ENCODE measurements at regions of chr17 and their contacts with region 1.

Region 1: DNA sequence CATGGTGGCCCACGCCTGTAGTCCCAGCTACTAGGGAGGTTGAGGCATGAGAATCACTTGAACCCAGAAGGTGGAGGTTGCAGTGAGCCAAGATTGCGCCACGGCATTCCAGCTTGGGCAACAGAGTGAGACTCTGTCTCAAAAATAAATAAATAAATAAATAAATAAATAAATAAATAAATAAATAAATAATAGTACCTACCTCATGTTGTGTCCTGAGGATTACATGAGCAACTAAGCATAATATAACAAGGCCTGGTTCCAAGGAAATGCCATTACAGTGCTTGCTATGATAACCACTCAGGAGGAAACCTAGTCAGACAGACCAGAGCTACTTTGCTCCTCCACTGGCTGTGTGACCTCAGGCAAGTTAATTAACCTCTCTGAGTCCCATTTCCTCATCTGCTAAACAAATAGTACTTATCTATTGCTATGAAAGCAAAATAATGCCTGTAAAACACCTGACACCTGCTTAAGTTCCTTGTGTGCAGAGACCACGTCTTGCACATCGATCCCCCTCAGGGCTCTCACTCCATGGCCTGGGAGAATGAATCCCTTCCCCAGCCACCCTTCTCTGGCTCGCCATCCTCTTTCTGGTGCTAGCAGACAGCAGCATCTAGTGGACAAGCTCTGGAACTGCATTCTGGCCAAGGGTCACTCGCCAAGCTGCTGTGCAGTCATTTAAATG is 7.5 kb downstream of the EPOP start:
- DNase-seq: peak; percentile 81
- ATAC-seq: peak; percentile 76
- H3K4me3 ChIP-seq: no peak overlapping the region
- H3K27ac ChIP-seq: no peak overlapping the region
- H3K4me1 ChIP-seq: peaks cover 6% of the 10 kb centered on the region
- H3K27me3 ChIP-seq: no peaks in the 10 kb centered on the region
- CTCF ChIP-seq: peak; percentile 95

Region 2: DNA sequence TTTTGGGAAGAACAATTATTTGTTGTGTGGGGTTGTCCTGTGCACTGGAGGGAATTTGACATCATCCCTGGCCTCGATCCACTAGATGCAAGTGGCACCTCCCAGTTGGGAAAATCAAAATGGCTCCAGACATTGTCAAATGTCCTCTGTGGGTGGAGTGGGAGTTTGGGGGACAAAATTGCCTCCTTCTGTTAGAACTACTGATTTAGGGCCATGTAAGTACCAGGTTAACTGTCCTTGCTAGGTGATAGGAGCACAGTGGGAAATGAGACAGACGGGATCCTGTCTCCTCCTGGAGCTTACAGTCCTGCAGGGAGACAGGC is 182.1 kb before region 1 on chr17:
- CTCF ChIA-PET with region 1: no interaction called
- POLR2A ChIA-PET with region 1: no interaction called
- in situ Hi-C with region 1: no loop called
- intact Hi-C with region 1: loop called (anchors 5 kb)
- DNase-seq: no peak
- ATAC-seq: no peak
- H3K4me3 ChIP-seq: no peak overlapping the region
- H3K27ac ChIP-seq: no peak overlapping the region
- H3K4me1 ChIP-seq: no peaks in the 10 kb centered on the region
- H3K27me3 ChIP-seq: no peaks in the 10 kb centered on the region
- CTCF ChIP-seq: peak; percentile 42

Region 3: GRCh38 chr17:38509008-38509771 is 158.1 kb before region 1 on chr17:
- CTCF ChIA-PET with region 1: interaction called, 22 read pairs
- POLR2A ChIA-PET with region 1: no interaction called
- in situ Hi-C with region 1: no loop called
- intact Hi-C with region 1: no loop called
- DNase-seq: peak; percentile 62
- ATAC-seq: peak; percentile 74
- H3K4me3 ChIP-seq: peak overlapping the region; percentile 40 to 57
- H3K27ac ChIP-seq: peak overlapping the region; percentile 60; the same call in 1 of the 2 replicates
- H3K4me1 ChIP-seq: peaks cover 12% of the 10 kb centered on the region
- H3K27me3 ChIP-seq: no peaks in the 10 kb centered on the region
- CTCF ChIP-seq: peak; percentile 81

Region 4: DNA sequence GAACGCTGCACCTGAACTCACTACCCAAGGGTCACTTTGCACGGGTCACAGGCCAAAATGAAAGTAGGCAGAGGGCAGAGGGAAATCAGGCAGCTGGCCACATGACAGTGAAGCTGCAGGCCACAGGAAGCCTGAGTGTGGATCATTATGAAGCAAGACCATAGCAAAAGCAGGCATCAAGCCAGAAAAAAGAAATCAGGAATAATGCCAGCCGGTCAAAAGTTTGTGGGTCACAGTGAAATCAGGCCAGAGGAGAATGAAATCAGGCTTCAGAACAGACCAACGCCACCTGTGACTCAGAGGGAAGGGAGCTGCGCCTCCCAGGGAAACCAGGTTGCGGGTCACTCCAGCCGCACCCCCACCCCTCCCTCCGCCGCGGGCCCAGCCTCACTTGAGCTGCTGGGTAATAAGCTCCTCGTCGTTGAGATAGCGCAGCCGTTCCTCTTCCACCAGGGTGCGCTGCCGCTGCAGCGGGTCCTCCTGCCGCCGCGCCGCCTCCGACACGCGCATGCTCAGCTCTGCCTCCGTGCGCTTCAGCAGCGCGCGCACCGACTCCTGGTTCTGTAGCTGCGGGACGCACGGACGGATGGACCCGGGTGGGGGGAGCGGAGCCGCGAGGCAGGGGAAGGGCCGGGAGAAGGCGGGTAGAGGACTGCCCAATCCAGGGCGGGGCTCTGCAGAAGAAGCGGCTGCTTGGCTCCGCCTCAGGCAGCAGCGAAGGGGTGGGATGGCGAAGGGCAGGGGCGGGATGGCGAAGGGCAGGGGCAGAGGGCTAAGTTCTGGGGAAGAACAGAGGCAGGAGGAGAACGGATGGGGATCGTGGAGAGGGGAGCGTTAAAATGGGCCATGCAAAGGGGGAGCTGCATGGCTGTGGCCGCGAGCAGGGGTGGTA is 109.2 kb before region 1 on chr17:
- CTCF ChIA-PET with region 1: interaction called, 14 read pairs
- POLR2A ChIA-PET with region 1: interaction called, 6 read pairs
- in situ Hi-C with region 1: no loop called
- intact Hi-C with region 1: loop called (anchors 1 kb)
- DNase-seq: peak; percentile 87
- ATAC-seq: peak; percentile 93
- H3K4me3 ChIP-seq: peak overlapping the region; percentile 48 to 71
- H3K27ac ChIP-seq: peak overlapping the region; percentile 77; the same call in 1 of the 2 replicates
- H3K4me1 ChIP-seq: peaks cover 4% of the 10 kb centered on the region; the same call in 1 of the 2 replicates
- H3K27me3 ChIP-seq: no peaks in the 10 kb centered on the region
- CTCF ChIP-seq: peak; percentile 87

Region 5: DNA sequence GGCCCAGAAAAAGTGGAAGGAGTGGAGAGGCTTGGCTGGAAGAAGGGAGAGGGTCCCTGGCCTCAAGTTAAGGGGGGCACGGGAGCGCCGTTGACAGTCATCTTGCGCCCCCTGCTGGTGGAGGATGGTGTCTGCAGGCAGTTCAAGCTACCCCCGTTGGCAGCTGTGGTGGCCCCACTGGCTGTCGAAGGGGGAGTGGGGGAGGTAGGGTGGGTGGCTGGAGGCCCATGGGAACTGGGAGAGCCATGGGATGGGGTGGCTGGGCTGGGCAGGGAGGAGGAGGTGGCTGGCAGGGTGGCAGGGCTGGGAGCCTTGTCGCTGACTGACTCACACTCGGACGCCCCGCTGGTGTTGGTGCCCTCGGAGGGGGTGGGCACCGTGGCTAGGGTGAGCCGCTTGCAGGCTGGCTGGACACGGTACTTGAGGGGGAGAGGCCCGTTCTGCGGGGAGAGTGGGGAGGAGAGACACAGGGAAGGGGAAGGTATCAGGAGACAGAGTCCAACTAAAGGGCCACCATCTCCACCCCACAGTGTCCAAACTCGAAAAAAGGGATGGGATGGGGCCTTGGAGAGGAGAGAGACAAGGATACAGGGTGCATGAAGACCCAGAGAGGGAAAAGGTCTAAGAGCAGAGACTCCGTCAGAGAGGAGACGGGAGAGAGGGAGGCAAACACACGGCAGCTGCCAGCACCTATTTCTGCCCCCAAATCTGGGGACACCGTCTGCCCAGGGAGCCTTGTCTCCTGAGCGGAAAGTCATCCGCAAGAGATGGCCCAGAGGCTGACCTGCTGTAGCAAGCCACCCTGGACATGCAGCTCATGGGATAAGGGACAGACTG is 68.1 kb after region 1 on chr17:
- CTCF ChIA-PET with region 1: interaction called, 12 read pairs
- POLR2A ChIA-PET with region 1: no interaction called
- in situ Hi-C with region 1: no loop called
- intact Hi-C with region 1: no loop called
- DNase-seq: no peak
- ATAC-seq: peak; percentile 31
- H3K4me3 ChIP-seq: no peak overlapping the region
- H3K27ac ChIP-seq: peak overlapping the region; percentile 51; the same call in 1 of the 2 replicates
- H3K4me1 ChIP-seq: peaks cover 35% of the 10 kb centered on the region
- H3K27me3 ChIP-seq: no peaks in the 10 kb centered on the region
- CTCF ChIP-seq: peak; percentile 85

Measured in Panc1 (cell line).